WTC11 (cell line): ENCODE measurements at regions of chr6 and their contacts with region 1.

Region 1: DNA sequence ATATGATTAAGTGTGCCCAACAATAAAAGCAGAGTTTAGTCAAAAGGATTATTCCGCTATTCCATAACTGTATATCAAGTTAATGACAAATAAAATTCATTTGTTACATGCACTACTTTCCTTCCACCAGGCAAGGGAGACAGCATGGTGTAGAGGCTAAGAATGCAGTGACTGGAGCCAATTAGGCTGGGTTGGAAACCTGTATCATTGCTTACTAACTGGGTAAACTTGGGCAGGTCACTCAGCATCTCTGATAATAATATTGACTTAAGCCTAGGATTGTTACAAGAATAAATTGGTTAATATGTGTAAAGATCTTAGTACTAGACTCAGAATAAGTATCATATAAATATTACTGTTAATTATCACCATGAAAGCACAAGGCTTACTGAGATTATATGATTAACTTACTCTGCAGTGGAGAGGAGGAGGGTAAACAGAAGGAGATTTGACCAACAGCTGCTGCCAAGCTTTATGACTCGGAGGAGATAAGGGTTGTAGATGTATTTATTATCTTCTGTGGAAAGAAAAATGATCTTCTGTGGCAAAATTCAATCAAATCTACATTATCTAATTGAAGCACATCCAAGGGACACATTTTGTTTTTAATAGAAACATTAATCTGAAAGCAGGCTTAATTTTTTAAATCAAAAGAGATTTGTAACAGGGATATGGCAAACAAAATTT is 1459.9 kb downstream of the GRIK2 start:
- DNase-seq: no peak
- ATAC-seq: no peak
- H3K4me3 Mint-ChIP-seq: no peak overlapping the region
- H3K27ac Mint-ChIP-seq: no peak overlapping the region
- H3K4me1 Mint-ChIP-seq: no peaks in the 10 kb centered on the region
- H3K27me3 Mint-ChIP-seq: no peaks in the 10 kb centered on the region
- CTCF ChIP-seq: no peak

Region 2: DNA sequence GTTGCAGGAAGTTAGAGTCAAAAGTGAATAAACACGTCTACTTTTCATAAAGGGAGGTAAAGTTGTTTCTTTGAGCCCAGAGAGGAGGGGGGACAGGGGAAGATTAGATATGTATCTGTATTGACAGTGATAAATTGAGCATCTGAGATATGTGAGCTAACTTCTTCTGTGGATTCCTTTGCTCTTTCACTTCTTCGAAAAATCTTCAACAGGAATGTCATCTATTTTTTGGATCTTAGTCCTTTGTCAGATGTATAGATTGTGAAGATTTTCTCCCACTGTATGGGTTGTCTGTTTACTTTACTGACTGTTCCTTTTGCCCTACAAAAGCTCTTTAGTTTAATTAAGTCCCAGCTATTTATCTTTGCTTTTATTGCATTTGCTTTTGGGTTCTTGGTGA is 58.5 kb before region 1 on chr6:
- CTCF ChIA-PET with region 1: no interaction called
- POLR2A ChIA-PET with region 1: no interaction called
- DNase-seq: no peak
- ATAC-seq: no peak
- H3K4me3 Mint-ChIP-seq: no peak overlapping the region
- H3K27ac Mint-ChIP-seq: no peak overlapping the region
- H3K4me1 Mint-ChIP-seq: peaks cover 3% of the 10 kb centered on the region; the same call in 1 of the 2 replicates
- H3K27me3 Mint-ChIP-seq: no peaks in the 10 kb centered on the region
- CTCF ChIP-seq: no peak

Region 3: DNA sequence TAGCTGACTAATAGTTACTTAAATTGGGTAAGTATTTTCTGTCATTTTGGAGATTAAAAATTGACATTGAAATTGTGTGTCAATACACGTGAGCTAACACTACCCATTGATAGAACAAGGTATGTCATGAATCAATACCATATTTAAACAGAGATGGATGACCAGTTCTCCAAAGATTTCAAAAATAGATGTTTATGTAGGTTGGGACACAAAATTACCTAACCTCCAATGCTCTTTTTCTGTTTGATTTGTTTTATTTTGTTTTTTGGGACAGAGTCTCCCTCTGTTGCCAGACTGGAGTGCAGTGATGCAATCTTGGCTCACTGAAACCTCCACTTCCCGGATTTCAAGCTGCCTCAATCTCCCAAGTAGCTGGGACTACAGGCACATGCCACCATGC is 31.8 kb after region 1 on chr6:
- CTCF ChIA-PET with region 1: interaction called, 10 read pairs
- POLR2A ChIA-PET with region 1: no interaction called
- DNase-seq: no peak
- ATAC-seq: no peak
- H3K4me3 Mint-ChIP-seq: no peak overlapping the region
- H3K27ac Mint-ChIP-seq: no peak overlapping the region
- H3K4me1 Mint-ChIP-seq: no peaks in the 10 kb centered on the region
- H3K27me3 Mint-ChIP-seq: no peaks in the 10 kb centered on the region
- CTCF ChIP-seq: no peak

Region 4: GRCh38 chr6:103122766-103123601 is 269.6 kb after region 1 on chr6:
- CTCF ChIA-PET with region 1: interaction called, 63 read pairs
- POLR2A ChIA-PET with region 1: interaction called, 3 read pairs
- DNase-seq: peak; percentile 87
- ATAC-seq: peak; percentile 98
- H3K4me3 Mint-ChIP-seq: no peak overlapping the region; the same call in 1 of the 2 replicates
- H3K27ac Mint-ChIP-seq: no peak overlapping the region
- H3K4me1 Mint-ChIP-seq: no peaks in the 10 kb centered on the region; the same call in 1 of the 2 replicates
- H3K27me3 Mint-ChIP-seq: no peaks in the 10 kb centered on the region
- CTCF ChIP-seq: peak; percentile 62